ENCODE measurements at regions of chr16 and their contacts with region 1.

Region 1: DNA sequence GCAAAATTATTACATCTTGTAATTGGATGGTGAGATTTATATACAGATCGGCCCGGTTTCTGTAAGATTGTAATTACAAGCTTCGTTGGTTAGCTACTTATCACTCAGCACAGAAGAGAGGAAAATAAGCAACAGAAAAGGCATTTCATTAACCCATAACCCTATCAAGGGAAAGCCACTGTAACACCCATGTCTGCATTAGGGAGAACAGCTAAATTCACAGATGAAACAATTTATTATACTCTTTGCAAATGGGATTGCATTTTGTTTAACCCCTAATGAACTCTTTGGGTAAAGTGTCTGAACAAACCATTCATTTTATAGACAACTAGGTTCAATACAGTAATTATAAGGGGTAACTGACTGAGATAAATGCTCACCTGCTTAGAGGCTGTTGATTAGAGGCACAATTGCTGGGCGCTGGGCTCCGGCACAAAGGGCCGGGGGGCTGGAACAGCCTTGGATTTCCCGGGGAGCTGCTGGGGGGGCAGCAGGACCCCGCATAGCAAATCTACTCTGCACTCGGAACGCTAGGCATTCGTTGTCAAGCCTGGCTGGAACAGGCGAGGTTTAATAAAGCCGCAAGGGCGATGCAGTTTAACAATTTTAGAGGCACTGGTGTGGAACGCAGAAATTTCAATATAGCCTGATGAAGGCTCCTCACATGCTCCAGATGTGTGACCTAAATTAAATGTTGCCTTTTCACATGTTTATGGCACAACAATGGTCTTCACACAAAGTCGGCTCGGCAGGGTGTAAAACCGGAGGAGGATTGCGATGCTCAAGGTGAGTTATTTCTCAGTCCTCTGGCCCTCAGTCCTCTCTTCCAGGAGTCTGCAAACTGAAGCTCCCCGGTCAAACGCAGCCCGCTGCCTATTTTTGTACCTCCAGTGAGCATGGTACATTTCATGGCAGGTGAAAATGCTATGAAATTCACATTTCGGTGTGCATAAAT is 134.0 kb upstream of the IRX6 start:
- DNase-seq: no peak
- H3K4me3 ChIP-seq: no peak overlapping the region
- H3K27ac ChIP-seq: no peak overlapping the region
- H3K4me1 ChIP-seq: no peaks in the 10 kb centered on the region
- CTCF ChIP-seq: no peak

Region 2: GRCh38 chr16:55136356-55137150 is 53.4 kb before region 1 on chr16:
- CTCF ChIA-PET with region 1: no interaction called
- POLR2A ChIA-PET with region 1: no interaction called
- intact Hi-C with region 1: loop called (anchors 10 kb)
- DNase-seq: no peak
- H3K4me3 ChIP-seq: no peak overlapping the region
- H3K27ac ChIP-seq: no peak overlapping the region
- H3K4me1 ChIP-seq: no peaks in the 10 kb centered on the region
- CTCF ChIP-seq: no peak

Region 3: GRCh38 chr16:55912022-55912421 is 722.1 kb after region 1 on chr16:
- CTCF ChIA-PET with region 1: no interaction called
- POLR2A ChIA-PET with region 1: no interaction called
- intact Hi-C with region 1: no loop called
- DNase-seq: no peak
- H3K4me3 ChIP-seq: no peak overlapping the region
- H3K27ac ChIP-seq: no peak overlapping the region
- H3K4me1 ChIP-seq: no peaks in the 10 kb centered on the region
- CTCF ChIP-seq: no peak

Measured in OCI-LY7 (cell line).